Panc1 (cell line): ENCODE measurements at regions of chr6 and their contacts with region 1.

Region 1: GRCh38 chr6:10733151-10733715 is 10.4 kb downstream of the TMEM14C start:
- DNase-seq: no peak
- ATAC-seq: no peak
- H3K4me3 ChIP-seq: no peak overlapping the region
- H3K27ac ChIP-seq: peak overlapping the region; percentile 98
- H3K4me1 ChIP-seq: peaks cover 28% of the 10 kb centered on the region
- H3K27me3 ChIP-seq: no peaks in the 10 kb centered on the region
- CTCF ChIP-seq: no peak

Region 2: GRCh38 chr6:10743515-10743914 is 10.3 kb after region 1 on chr6:
- CTCF ChIA-PET with region 1: no interaction called
- POLR2A ChIA-PET with region 1: interaction called, 10 read pairs
- in situ Hi-C with region 1: no loop called
- intact Hi-C with region 1: no loop called
- DNase-seq: no peak
- ATAC-seq: no peak
- H3K4me3 ChIP-seq: no peak overlapping the region
- H3K27ac ChIP-seq: no peak overlapping the region
- H3K4me1 ChIP-seq: peaks cover 18% of the 10 kb centered on the region
- H3K27me3 ChIP-seq: no peaks in the 10 kb centered on the region
- CTCF ChIP-seq: no peak

Region 3: DNA sequence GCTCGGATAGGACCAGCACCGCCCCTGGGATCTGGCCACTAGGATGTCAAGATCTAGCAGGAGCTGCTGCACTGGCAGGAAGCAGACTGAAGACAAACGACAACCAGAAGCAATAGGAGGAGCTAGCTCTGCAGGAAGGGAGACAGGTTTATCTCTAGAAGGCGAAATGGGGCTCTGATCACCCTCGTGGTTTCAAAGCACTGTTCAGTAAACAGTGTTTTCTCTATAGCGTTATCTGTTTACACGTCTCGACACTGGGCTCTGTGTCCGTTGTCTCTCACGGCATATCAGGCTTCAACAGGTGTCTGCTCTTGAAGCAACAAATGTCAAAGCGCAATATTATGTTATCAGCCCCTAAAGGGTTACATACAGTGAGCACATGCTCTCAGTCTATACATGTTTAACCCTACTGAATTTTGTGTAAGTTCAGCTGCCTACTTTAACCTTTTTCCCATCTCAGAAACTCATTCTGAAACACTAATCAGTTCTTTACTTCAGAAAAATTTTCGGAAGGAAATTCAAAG is 38.2 kb after region 1 on chr6:
- CTCF ChIA-PET with region 1: no interaction called
- POLR2A ChIA-PET with region 1: no interaction called
- in situ Hi-C with region 1: no loop called
- intact Hi-C with region 1: no loop called
- DNase-seq: no peak
- ATAC-seq: peak; percentile 42; the same call in 1 of the 2 replicates
- H3K4me3 ChIP-seq: no peak overlapping the region
- H3K27ac ChIP-seq: no peak overlapping the region
- H3K4me1 ChIP-seq: no peaks in the 10 kb centered on the region
- H3K27me3 ChIP-seq: no peaks in the 10 kb centered on the region
- CTCF ChIP-seq: no peak